MCF 10A (cell line): ENCODE measurements at regions of chr1 and their contacts with region 1.

Region 1: DNA sequence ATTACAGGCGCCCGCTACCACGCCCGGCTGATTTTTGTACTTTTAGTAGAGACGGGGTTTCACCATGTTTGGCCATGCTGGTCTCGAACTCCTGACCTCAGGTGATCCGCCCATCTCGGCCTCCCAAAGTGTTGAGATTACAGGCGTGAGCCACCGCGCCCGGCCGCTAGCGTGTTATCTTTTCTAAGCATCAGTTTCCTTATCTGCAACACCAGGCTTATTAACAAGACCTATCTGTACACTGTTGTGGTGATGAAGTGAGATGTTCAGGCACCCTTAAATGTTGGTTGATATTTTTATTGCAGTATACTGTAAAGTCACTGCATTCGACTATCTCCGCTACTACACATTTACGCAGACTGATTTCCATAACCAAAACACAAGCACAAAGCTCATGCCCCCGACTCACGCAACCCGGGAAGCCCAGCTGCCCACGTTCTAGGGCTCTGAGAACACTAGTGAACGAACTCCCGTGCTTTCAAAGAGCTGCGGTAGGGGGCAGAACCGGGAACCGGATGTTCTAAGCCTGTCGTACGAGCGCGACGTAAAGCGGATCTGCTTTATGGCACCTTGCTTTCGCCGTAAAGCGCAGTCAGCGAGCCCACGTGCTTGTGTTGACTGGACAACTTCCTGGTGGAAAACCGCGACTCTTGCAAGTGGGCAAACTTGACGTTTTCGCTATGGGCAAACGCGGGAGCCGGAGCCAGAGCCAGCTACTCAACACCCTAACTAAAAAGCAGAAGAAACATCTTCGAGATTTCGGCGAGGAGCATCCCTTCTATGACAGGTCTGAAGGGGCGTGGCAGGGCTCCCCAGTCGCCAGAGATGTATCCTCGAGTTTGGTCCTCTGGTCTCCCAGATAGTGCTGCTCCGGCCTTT is at the start of gene UTP25:
- DNase-seq: peak; percentile 99
- H3K4me3 Mint-ChIP-seq: peak within 1 kb of the TSS; percentile 92
- H3K27ac Mint-ChIP-seq: peak within 1 kb of the TSS; percentile 89
- H3K4me1 Mint-ChIP-seq: peaks cover 65% of the 10 kb centered on the region
- H3K27me3 Mint-ChIP-seq: no peaks in the 10 kb centered on the region
- CTCF ChIP-seq: peak; percentile 88
- total RNA-seq, gene UTP25: 20.4 and 23.8 TPM in 2 replicates

Region 2: DNA sequence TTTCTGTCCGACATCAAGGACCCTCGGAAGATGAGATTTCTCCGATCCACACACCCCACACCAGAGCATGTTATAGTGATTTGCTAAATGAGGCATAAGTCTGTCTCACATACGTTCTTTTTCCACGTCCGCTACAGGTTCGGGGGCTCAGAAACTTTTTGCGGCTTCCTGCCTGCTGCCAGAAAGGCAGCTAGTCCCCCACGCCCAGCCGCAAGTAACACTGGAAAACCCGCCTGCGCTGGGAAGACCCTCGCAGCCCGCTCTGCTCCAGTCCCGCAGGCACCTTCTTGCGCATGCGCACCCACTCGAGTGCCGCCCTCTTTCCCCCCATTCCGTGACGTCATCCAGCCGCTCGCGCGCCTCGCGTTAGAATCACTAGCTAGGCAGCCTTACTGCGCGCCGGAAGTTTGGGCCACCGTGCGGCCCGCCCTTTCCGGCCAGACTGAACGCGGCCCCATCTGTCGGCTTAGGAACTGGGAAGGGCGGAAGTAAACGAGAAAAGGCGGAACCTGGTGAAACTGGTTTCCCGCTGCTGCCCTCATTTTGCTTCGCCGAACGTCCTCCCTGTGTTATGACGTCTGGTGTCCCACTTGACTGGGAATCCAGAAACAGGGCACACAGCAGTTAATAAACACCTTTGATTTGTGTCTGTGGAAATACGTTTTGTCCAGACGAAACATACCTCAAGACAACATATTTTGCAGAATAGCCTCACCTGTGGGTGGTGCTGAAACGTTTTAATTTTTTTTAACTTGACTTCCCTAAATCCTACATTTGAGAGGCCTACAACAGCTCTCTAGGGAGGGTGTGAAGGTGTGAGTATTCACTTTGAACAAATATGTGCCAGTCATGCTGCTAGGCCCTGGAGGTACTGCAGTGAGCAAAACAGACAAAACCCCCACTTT is 43.1 kb before region 1 on chr1 and contains the start of gene C1orf74:
- CTCF ChIA-PET with region 1: interaction called, 70 read pairs
- POLR2A ChIA-PET with region 1: interaction called, 49 read pairs
- intact Hi-C with region 1: loop called (anchors 2 kb)
- DNase-seq: peak; percentile 100
- H3K4me3 Mint-ChIP-seq: peak within 1 kb of the TSS; percentile 90
- H3K27ac Mint-ChIP-seq: peak within 1 kb of the TSS; percentile 96
- H3K4me1 Mint-ChIP-seq: peaks cover 22% of the 10 kb centered on the region
- H3K27me3 Mint-ChIP-seq: no peaks in the 10 kb centered on the region
- CTCF ChIP-seq: no peak
- total RNA-seq, gene C1orf74: 6.8 and 7.1 TPM in 2 replicates

Region 3: GRCh38 chr1:209797978-209798639 is 29.5 kb before region 1 on chr1:
- CTCF ChIA-PET with region 1: interaction called, 263 read pairs
- POLR2A ChIA-PET with region 1: interaction called, 83 read pairs
- intact Hi-C with region 1: no loop called
- DNase-seq: peak; percentile 74
- H3K4me3 Mint-ChIP-seq: peak overlapping the region; percentile 17
- H3K27ac Mint-ChIP-seq: no peak overlapping the region
- H3K4me1 Mint-ChIP-seq: peaks cover 28% of the 10 kb centered on the region
- H3K27me3 Mint-ChIP-seq: no peaks in the 10 kb centered on the region
- CTCF ChIP-seq: no peak

Region 4: GRCh38 chr1:209839875-209840491 is 12.4 kb after region 1 on chr1:
- CTCF ChIA-PET with region 1: interaction called, 1,144 read pairs
- POLR2A ChIA-PET with region 1: interaction called, 103 read pairs
- intact Hi-C with region 1: no loop called
- DNase-seq: peak; percentile 99
- H3K4me3 Mint-ChIP-seq: peak overlapping the region; percentile 29
- H3K27ac Mint-ChIP-seq: peak overlapping the region; percentile 82
- H3K4me1 Mint-ChIP-seq: peaks cover 30% of the 10 kb centered on the region
- H3K27me3 Mint-ChIP-seq: no peaks in the 10 kb centered on the region
- CTCF ChIP-seq: no peak

Region 5: GRCh38 chr1:209860293-209860881 is 32.8 kb after region 1 on chr1:
- CTCF ChIA-PET with region 1: interaction called, 117 read pairs
- POLR2A ChIA-PET with region 1: interaction called, 6 read pairs
- intact Hi-C with region 1: no loop called
- DNase-seq: peak; percentile 94
- H3K4me3 Mint-ChIP-seq: no peak overlapping the region
- H3K27ac Mint-ChIP-seq: peak overlapping the region; percentile 73
- H3K4me1 Mint-ChIP-seq: peaks cover 43% of the 10 kb centered on the region
- H3K27me3 Mint-ChIP-seq: no peaks in the 10 kb centered on the region
- CTCF ChIP-seq: peak; percentile 99

Region 6: GRCh38 chr1:209899948-209900347 is 72.3 kb after region 1 on chr1:
- CTCF ChIA-PET with region 1: interaction called, 12 read pairs
- POLR2A ChIA-PET with region 1: no interaction called
- intact Hi-C with region 1: no loop called
- DNase-seq: peak; percentile 54
- H3K4me3 Mint-ChIP-seq: no peak overlapping the region
- H3K27ac Mint-ChIP-seq: peak overlapping the region; percentile 70
- H3K4me1 Mint-ChIP-seq: peaks cover 45% of the 10 kb centered on the region
- H3K27me3 Mint-ChIP-seq: no peaks in the 10 kb centered on the region
- CTCF ChIP-seq: peak; percentile 36

Region 7: DNA sequence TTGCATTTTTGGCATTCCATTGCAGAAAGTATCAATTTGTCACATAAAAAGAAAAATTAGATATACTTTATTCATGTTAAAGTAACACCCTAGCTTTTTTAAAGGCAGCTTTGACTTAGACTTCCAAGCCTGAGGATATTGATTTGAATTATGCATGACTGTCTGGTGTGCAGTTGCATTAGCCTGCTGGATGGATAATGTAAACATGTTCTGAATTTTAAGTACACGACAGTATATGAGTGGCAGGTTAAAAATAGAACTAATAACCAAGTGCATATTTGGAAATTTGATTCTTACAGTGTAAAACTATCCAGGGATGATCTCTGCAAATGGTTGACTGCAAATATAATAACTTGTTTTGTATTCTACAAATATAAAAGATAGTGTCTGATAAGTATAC is 234.4 kb after region 1 on chr1:
- CTCF ChIA-PET with region 1: no interaction called
- POLR2A ChIA-PET with region 1: no interaction called
- intact Hi-C with region 1: no loop called
- DNase-seq: no peak
- H3K4me3 Mint-ChIP-seq: no peak overlapping the region
- H3K27ac Mint-ChIP-seq: no peak overlapping the region
- H3K4me1 Mint-ChIP-seq: no peaks in the 10 kb centered on the region
- H3K27me3 Mint-ChIP-seq: peaks cover 87% of the 10 kb centered on the region
- CTCF ChIP-seq: no peak